ENCODE measurements at regions of chr12 and their contacts with region 1.

Region 1: DNA sequence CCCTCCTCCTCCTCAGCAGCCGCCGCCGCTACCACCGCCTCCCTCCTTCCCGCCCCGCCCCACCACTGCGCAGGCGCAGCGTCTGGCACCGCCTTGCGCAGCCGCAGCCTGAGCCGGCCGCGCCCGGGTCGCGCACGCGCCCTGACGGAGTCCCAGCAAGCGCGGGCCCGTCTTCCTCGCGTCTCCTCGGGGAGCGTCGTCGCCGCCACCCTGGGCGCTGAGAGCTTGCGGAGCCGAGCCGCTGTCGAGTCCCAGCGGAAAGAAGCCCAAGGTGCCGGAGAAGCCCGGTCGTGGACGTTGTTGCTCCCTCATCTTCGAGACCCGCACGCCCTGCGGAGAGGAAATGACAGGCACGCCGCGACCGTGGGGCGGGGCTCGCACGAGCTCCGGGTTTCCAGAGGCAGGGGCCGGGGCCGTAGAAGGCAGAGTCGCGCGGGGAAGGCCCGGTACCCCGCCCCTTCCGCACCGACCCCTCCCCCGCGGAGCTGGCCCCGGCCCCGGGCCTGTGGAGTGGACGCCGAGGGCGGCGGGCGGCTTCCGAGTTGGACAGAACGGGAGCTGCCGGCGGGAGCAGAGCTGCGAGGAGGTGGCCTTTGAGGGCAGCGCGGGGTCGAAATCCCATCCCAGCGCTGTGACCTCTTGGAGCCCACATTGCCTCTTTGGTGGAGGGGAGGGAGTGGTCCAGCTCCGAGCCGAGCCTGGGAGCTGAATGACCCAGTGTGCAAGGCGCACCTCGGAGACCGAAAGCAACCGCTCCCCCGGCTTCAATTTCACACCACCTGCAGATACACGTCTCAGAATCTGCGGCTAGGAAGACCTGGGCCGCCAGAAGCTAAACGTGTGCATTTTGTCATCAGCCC is 469 bp upstream of the RAB35 start:
- DNase-seq: peak; percentile 98
- ATAC-seq: peak; percentile 81
- H3K4me3 ChIP-seq: peak overlapping the region; percentile 61 to 92 (median 85)
- H3K4me3 Mint-ChIP-seq: peak overlapping the region; percentile 87
- H3K27ac ChIP-seq: peak overlapping the region; percentile 66 to 80
- H3K27ac Mint-ChIP-seq: peak overlapping the region; percentile 86
- H3K4me1 ChIP-seq: peaks cover 43 to 62% of the 10 kb centered on the region in 2 donors
- H3K4me1 Mint-ChIP-seq: peaks cover 74% of the 10 kb centered on the region
- H3K27me3 ChIP-seq: no peaks in the 10 kb centered on the region
- H3K27me3 Mint-ChIP-seq: no peaks in the 10 kb centered on the region
- CTCF ChIP-seq: no peak

Region 2: DNA sequence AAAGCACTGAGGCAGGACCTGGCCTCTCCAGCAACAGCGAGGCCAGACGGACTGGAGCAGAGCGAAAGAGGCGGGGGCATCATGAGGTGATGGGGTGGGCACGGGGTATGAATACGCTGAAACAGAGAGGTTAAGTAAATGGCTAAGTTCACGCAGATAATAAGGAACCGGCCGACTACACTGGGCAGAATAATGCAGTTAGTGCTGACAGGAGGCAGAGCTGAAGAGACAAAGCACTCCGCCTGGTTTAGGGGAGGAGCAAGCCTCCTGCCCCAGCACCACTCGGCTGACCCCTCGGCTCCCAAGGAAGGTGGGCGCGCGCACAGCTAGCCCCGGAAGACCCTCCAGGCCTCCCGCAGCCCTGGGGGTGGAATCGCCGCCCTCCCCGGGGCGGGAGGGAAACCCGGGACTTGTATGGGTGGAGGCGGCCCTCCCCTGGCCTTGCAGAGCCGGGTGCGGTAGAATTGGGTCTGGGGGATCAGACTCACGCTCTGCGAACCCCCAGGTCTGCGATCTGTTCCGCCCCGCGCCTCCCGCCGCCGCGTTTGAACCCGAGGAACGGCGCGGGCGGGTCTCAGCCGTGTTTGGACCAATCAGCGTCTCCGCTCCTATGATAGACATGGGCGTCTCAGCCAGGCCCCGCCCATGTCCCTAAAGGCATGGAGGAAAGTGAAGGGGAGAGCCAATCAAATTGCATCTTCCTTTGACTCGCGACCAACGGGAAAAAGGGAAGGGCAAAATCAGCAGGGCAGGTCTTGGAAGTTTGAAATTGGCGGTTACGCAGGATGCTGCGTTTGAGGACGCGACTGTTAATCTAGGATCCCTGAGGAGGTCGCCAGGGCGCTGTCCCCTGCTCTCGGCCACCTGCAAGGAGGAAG is 240.0 kb before region 1 on chr12 and contains the start of gene CIT:
- CTCF ChIA-PET with region 1: no interaction called
- POLR2A ChIA-PET with region 1: no interaction called
- intact Hi-C with region 1: loop called (anchors 1 kb)
- DNase-seq: peak; percentile 87
- ATAC-seq: peak; percentile 99
- H3K4me3 ChIP-seq: peak within 1 kb of the TSS; percentile 47 to 90 (median 87)
- H3K4me3 Mint-ChIP-seq: peak within 1 kb of the TSS; percentile 84
- H3K27ac ChIP-seq: peak within 1 kb of the TSS in 1 of 2 donors; percentile 54
- H3K27ac Mint-ChIP-seq: peak within 1 kb of the TSS; percentile 28
- H3K4me1 ChIP-seq: peaks cover 0 to 11% of the 10 kb centered on the region in 2 donors
- H3K4me1 Mint-ChIP-seq: peaks cover 13% of the 10 kb centered on the region
- H3K27me3 ChIP-seq: no peaks in the 10 kb centered on the region
- H3K27me3 Mint-ChIP-seq: peaks cover 9% of the 10 kb centered on the region
- CTCF ChIP-seq: no peak
- total RNA-seq, gene CIT: 6.1 and 6.2 TPM in 2 replicates

Region 3: GRCh38 chr12:119988782-119989668 is 128.0 kb before region 1 on chr12 and contains the start of gene BICDL1:
- CTCF ChIA-PET with region 1: no interaction called
- POLR2A ChIA-PET with region 1: interaction called, 3 read pairs
- intact Hi-C with region 1: loop called (anchors 1 kb)
- DNase-seq: peak; percentile 98
- ATAC-seq: peak; percentile 82
- H3K4me3 ChIP-seq: peak within 1 kb of the TSS in 4 of 5 experiments; percentile 47 to 69 (median 59)
- H3K4me3 Mint-ChIP-seq: peak within 1 kb of the TSS; percentile 88
- H3K27ac ChIP-seq: peak within 1 kb of the TSS; percentile 41 to 67
- H3K27ac Mint-ChIP-seq: peak within 1 kb of the TSS; percentile 89
- H3K4me1 ChIP-seq: peaks cover 13 to 16% of the 10 kb centered on the region in 2 donors
- H3K4me1 Mint-ChIP-seq: peaks cover 24% of the 10 kb centered on the region
- H3K27me3 ChIP-seq: peaks cover 0 to 6% (median 0%) of the 10 kb centered on the region in 4 experiments
- H3K27me3 Mint-ChIP-seq: peaks cover 5% of the 10 kb centered on the region
- CTCF ChIP-seq: no peak
- total RNA-seq, gene BICDL1: 41.5 and 43.6 TPM in 2 replicates

Region 4: DNA sequence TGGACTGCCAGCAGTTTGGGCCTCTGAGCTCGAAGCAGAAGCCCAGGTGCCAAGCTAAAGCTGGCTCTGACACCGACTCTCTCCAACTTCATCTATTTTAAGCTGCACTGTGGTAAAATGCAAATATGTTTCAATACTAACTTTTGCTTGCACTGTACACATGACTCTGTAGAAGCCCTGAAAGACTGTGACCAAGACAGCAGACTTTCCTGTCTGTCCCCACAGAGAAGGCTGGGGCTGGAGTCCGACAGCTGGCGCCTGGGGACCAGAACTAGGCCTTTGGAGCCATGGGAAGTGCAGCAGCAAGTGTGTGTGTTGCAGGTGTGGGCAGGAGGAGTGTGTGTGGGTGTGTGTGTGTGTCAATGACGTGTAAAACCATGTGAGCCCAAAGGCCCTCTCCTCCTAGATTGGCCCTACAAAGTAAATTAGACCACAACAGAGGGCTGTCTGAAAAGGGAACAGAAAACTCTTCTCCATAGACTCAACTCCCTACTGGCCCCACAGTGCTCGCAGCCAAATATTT is 15.9 kb after region 1 on chr12:
- CTCF ChIA-PET with region 1: interaction called, 3 read pairs
- POLR2A ChIA-PET with region 1: interaction called, 22 read pairs
- intact Hi-C with region 1: loop called (anchors 2 kb)
- DNase-seq: peak; percentile 75
- ATAC-seq: peak; percentile 89
- H3K4me3 ChIP-seq: peak overlapping the region in 1 of 5 experiments; percentile 14
- H3K4me3 Mint-ChIP-seq: peak overlapping the region; percentile 20
- H3K27ac ChIP-seq: peak overlapping the region; percentile 37 to 62
- H3K27ac Mint-ChIP-seq: peak overlapping the region; percentile 80
- H3K4me1 ChIP-seq: peaks cover 20 to 31% of the 10 kb centered on the region in 2 donors
- H3K4me1 Mint-ChIP-seq: peaks cover 22% of the 10 kb centered on the region
- H3K27me3 ChIP-seq: no peaks in the 10 kb centered on the region
- H3K27me3 Mint-ChIP-seq: no peaks in the 10 kb centered on the region
- CTCF ChIP-seq: no peak

Region 5: GRCh38 chr12:120194534-120195395 is 77.7 kb after region 1 on chr12 and contains the start of gene GCN1:
- CTCF ChIA-PET with region 1: interaction called, 4 read pairs
- POLR2A ChIA-PET with region 1: interaction called, 23 read pairs
- intact Hi-C with region 1: loop called (anchors 5 kb)
- DNase-seq: peak; percentile 89
- ATAC-seq: peak; percentile 96
- H3K4me3 ChIP-seq: peak within 1 kb of the TSS; percentile 74 to 89 (median 78)
- H3K4me3 Mint-ChIP-seq: peak within 1 kb of the TSS; percentile 90
- H3K27ac ChIP-seq: peak within 1 kb of the TSS; percentile 48 to 85
- H3K27ac Mint-ChIP-seq: peak within 1 kb of the TSS; percentile 89
- H3K4me1 ChIP-seq: peaks cover 24 to 35% of the 10 kb centered on the region in 2 donors
- H3K4me1 Mint-ChIP-seq: peaks cover 28% of the 10 kb centered on the region
- H3K27me3 ChIP-seq: no peaks in the 10 kb centered on the region
- H3K27me3 Mint-ChIP-seq: no peaks in the 10 kb centered on the region
- CTCF ChIP-seq: no peak
- total RNA-seq, gene GCN1: 127 and 160 TPM in 2 replicates

Measured in B cell (primary cell).